WTC11 (cell line): ENCODE measurements at regions of chr19 and their contacts with region 1.

Region 1: GRCh38 chr19:10416380-10417257 is 3.7 kb upstream of the PDE4A start:
- DNase-seq: peak; percentile 97
- ATAC-seq: peak; percentile 52
- H3K4me3 Mint-ChIP-seq: peak overlapping the region; percentile 72
- H3K27ac Mint-ChIP-seq: peak overlapping the region; percentile 90
- H3K4me1 Mint-ChIP-seq: peaks cover 26% of the 10 kb centered on the region
- H3K27me3 Mint-ChIP-seq: peaks cover 85% of the 10 kb centered on the region
- CTCF ChIP-seq: peak; percentile 99

Region 2: GRCh38 chr19:10269333-10270179 is 147.1 kb before region 1 on chr19:
- CTCF ChIA-PET with region 1: interaction called, 17 read pairs
- POLR2A ChIA-PET with region 1: no interaction called
- DNase-seq: peak; percentile 93
- ATAC-seq: peak; percentile 69
- H3K4me3 Mint-ChIP-seq: peak overlapping the region; percentile 68
- H3K27ac Mint-ChIP-seq: no peak overlapping the region
- H3K4me1 Mint-ChIP-seq: 0 out of 2 replicates have a peak, but pooled peaks cover 4% of the 10 kb centered on the region
- H3K27me3 Mint-ChIP-seq: peaks cover 46% of the 10 kb centered on the region
- CTCF ChIP-seq: peak; percentile 84

Region 3: GRCh38 chr19:10380313-10381102 is 36.1 kb before region 1 on chr19 and contains the start of gene TYK2:
- CTCF ChIA-PET with region 1: interaction called, 25 read pairs
- POLR2A ChIA-PET with region 1: no interaction called
- DNase-seq: peak; percentile 93
- ATAC-seq: peak; percentile 96
- H3K4me3 Mint-ChIP-seq: peak within 1 kb of the TSS; percentile 88
- H3K27ac Mint-ChIP-seq: peak within 1 kb of the TSS; percentile 97
- H3K4me1 Mint-ChIP-seq: peaks cover 9% of the 10 kb centered on the region
- H3K27me3 Mint-ChIP-seq: peaks cover 3% of the 10 kb centered on the region; the same call in 1 of the 2 replicates
- CTCF ChIP-seq: no peak
- total RNA-seq, gene TYK2: 63.8 to 66.4 TPM (median 65.1 TPM) in 3 replicates

Region 4: GRCh38 chr19:10403137-10404021 is 13.2 kb before region 1 on chr19 and contains the start of gene CDC37:
- CTCF ChIA-PET with region 1: interaction called, 229 read pairs
- POLR2A ChIA-PET with region 1: interaction called, 5 read pairs
- DNase-seq: peak; percentile 98
- ATAC-seq: peak; percentile 79
- H3K4me3 Mint-ChIP-seq: peak within 1 kb of the TSS; percentile 96
- H3K27ac Mint-ChIP-seq: peak within 1 kb of the TSS; percentile 89
- H3K4me1 Mint-ChIP-seq: peaks cover 19% of the 10 kb centered on the region
- H3K27me3 Mint-ChIP-seq: peaks cover 40% of the 10 kb centered on the region
- CTCF ChIP-seq: no peak
- total RNA-seq, gene CDC37: 163 to 204 TPM (median 164 TPM) in 3 replicates

Region 5: DNA sequence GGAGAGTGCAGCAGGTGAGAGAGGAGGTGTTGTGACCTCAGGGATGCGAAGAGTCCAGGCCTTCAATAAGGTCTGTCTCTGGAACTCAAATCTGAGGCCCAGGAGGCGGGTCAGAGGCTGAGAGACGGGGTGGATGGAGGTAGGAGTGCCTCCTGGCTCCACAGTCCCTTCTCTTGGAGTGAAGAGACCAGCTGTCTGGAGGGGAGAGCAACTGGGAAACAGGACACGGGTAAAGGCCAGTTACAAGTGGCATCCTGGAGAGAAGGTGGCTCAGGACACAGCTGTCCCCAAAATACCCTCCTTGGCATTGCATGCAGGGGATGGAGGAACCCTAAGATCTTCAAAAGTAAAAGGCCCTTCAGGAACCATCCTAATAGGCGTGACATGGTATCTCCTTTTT is 23.0 kb after region 1 on chr19:
- CTCF ChIA-PET with region 1: interaction called, 14 read pairs
- POLR2A ChIA-PET with region 1: no interaction called
- DNase-seq: no peak
- ATAC-seq: no peak
- H3K4me3 Mint-ChIP-seq: no peak overlapping the region
- H3K27ac Mint-ChIP-seq: no peak overlapping the region
- H3K4me1 Mint-ChIP-seq: no peaks in the 10 kb centered on the region
- H3K27me3 Mint-ChIP-seq: no peaks in the 10 kb centered on the region; the same call in 1 of the 2 replicates
- CTCF ChIP-seq: no peak

Region 6: GRCh38 chr19:10461047-10461790 is 44.6 kb after region 1 on chr19:
- CTCF ChIA-PET with region 1: interaction called, 16 read pairs
- POLR2A ChIA-PET with region 1: no interaction called
- DNase-seq: peak; percentile 99
- ATAC-seq: peak; percentile 96
- H3K4me3 Mint-ChIP-seq: peak overlapping the region; percentile 69
- H3K27ac Mint-ChIP-seq: peak overlapping the region; percentile 95; the same call in 1 of the 2 replicates
- H3K4me1 Mint-ChIP-seq: peaks cover 3% of the 10 kb centered on the region; the same call in 1 of the 2 replicates
- H3K27me3 Mint-ChIP-seq: peaks cover 19% of the 10 kb centered on the region
- CTCF ChIP-seq: no peak

Region 7: GRCh38 chr19:10662384-10663251 is 246.0 kb after region 1 on chr19:
- CTCF ChIA-PET with region 1: no interaction called
- POLR2A ChIA-PET with region 1: no interaction called
- DNase-seq: no peak
- ATAC-seq: no peak; the same call in 1 of the 2 replicates
- H3K4me3 Mint-ChIP-seq: no peak overlapping the region
- H3K27ac Mint-ChIP-seq: peak overlapping the region; percentile 96
- H3K4me1 Mint-ChIP-seq: peaks cover 33% of the 10 kb centered on the region
- H3K27me3 Mint-ChIP-seq: no peaks in the 10 kb centered on the region
- CTCF ChIP-seq: no peak

Region 8: GRCh38 chr19:10695401-10696398 is 279.1 kb after region 1 on chr19:
- CTCF ChIA-PET with region 1: interaction called, 14 read pairs
- POLR2A ChIA-PET with region 1: interaction called, 3 read pairs
- DNase-seq: peak; percentile 99
- ATAC-seq: peak; percentile 88
- H3K4me3 Mint-ChIP-seq: peak overlapping the region; percentile 76
- H3K27ac Mint-ChIP-seq: peak overlapping the region; percentile 98
- H3K4me1 Mint-ChIP-seq: peaks cover 22% of the 10 kb centered on the region
- H3K27me3 Mint-ChIP-seq: peaks cover 5% of the 10 kb centered on the region
- CTCF ChIP-seq: no peak